ENCODE measurements at regions of chr22 and their contacts with region 1.

Region 1: GRCh38 chr22:22666307-22667091 is 22.1 kb downstream of the GGTLC2 start:
- DNase-seq: no peak
- ATAC-seq: peak; percentile 99
- H3K4me3 ChIP-seq: no peak overlapping the region
- H3K27ac ChIP-seq: no peak overlapping the region
- H3K4me1 ChIP-seq: no peaks in the 10 kb centered on the region
- H3K27me3 ChIP-seq: no peaks in the 10 kb centered on the region
- CTCF ChIP-seq: peak; percentile 60 to 81 (median 64); a peak in 5 of 6 replicates
- POLR2A ChIP-seq: no peak
- RAD21 ChIP-seq: peak; percentile 51

Region 2: DNA sequence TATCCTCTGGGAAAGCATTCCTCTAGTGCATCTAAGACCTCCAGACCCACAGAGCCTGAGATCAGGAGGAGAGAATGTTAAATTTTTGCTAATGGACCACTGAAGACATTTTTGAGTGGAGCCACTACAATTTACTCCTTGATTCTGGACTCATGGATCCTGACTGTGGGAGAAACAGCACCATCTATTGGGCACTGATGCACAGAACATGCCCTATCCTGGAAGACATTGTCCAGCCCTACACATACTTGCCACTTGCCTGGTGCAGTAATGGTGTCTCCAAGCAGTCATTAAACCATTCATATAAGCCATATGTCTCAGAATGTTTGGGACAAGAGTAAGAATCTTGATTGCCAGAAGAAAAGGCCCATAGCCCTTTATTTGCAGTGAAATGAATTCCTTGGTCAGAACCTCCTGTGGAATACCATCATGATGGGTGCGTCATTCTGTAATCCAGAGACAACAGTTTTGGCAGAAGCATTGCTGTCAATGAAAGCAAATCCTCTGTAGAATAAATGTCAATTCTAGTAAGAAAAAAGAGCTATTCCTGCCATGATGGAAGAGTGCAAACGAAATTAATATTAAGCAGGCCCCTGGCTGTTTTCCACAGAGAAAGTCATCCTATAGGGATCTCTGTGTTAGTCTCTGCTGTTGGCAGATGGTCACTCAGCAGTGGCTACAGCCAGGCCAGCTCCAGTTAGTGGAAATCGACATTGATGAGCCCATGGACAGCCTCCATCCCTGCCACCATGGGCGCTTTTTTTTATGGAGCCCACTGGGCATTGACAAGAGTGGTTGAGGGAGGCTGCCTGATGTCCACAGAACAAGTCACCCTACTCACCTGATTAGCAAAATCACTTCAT is 21.4 kb after region 1 on chr22:
- CTCF ChIA-PET with region 1: interaction called, 26 read pairs
- POLR2A ChIA-PET with region 1: interaction called, 3 read pairs
- RAD21 ChIA-PET with region 1: interaction called in 1 of 2 experiments, 7 read pairs
- intact Hi-C with region 1: no loop called
- DNase-seq: no peak
- ATAC-seq: peak; percentile 89
- H3K4me3 ChIP-seq: no peak overlapping the region
- H3K27ac ChIP-seq: no peak overlapping the region
- H3K4me1 ChIP-seq: peaks cover 0 to 6% of the 10 kb centered on the region in 2 experiments; a peak in 3 of 4 replicates
- H3K27me3 ChIP-seq: no peaks in the 10 kb centered on the region
- CTCF ChIP-seq: peak; percentile 56 to 83 (median 82); a peak in 5 of 6 replicates
- POLR2A ChIP-seq: no peak
- RAD21 ChIP-seq: peak; percentile 58

Region 3: DNA sequence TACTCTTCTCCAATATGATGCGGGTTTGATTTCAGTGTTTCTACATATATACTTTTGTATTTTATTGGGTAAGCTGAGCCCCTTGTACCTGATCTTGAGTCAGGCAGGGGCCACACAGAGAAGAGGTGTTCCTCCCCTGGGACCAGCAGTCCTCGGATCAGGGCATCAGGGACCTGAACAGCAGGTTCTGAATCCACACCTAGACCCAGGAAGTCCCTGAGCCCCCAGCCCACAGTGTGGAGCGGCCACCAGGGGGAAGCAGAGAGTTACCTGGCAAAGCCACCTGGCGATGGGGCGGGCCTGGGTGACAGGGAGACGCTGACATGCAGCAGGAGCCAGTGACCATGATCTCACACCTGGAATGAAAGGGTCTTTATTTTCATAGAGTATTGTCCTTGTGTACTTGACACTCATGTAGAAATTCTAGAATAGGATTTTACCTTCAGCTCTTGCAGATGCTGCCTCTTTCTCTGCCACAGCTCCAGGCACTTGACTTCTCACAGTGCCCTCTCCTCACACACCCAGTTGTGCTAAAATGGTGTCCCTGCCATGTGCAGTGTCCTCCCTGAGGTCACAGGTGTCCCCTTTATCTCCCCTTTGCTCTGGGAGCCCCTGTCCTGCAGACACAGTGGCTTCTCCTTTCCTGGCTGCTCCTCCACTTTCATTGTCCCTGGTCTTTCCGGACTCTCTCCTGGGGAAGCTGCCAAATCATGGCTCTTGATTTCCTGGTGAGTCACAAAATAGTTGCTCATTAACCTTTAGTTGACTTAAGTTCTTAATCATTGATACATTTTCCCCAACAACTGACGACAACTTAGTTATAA is 26.4 kb after region 1 on chr22:
- CTCF ChIA-PET with region 1: interaction called, 14 read pairs
- POLR2A ChIA-PET with region 1: no interaction called
- RAD21 ChIA-PET with region 1: interaction called, 3 read pairs
- intact Hi-C with region 1: no loop called
- DNase-seq: no peak
- ATAC-seq: peak; percentile 99
- H3K4me3 ChIP-seq: peak overlapping the region in 1 of 2 experiments; percentile 36; a peak in 2 of 4 replicates
- H3K27ac ChIP-seq: no peak overlapping the region
- H3K4me1 ChIP-seq: peaks cover 10 to 24% of the 10 kb centered on the region in 2 experiments; a peak in 3 of 4 replicates
- H3K27me3 ChIP-seq: no peaks in the 10 kb centered on the region
- CTCF ChIP-seq: peak; percentile 69 to 98 (median 96); a peak in 5 of 6 replicates
- POLR2A ChIP-seq: no peak
- RAD21 ChIP-seq: peak; percentile 42

Region 4: DNA sequence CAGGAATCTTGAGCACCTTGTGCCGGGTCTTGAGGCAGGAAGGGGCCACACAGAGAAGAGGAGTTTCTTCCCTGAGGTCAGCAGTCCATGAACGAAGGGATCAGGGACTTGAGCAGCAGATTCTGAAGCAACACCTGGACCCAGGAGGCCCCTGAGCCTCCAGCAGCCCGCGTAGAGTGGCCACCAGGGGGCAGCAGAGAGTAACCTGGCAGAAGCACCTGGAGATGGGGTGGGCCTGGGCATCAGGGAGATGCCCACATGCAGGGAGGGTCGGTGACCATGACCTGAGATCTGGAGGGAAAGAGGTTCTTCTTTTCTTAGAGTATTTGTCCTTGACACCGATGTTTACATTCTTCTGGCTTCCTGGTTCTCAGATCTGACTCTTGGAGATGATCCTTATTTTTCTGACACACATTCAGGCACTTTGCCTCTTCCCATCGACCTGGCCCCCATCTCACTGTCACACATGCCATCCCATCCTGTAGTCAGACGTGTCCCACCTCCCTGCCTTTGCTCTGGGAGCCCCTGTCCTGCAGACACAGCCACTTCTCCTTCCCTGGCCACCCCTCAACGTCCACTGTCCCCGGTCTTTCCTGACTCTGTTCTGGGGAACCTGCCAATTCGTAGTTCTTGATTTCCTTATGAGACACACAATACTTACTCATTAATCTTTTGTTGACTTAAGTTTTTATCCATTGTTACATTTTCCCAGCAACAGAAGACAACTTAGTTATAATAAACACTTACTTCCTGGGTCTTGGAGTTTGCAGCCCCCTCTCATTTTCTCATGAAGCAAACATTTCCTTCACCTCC is 44.4 kb after region 1 on chr22:
- CTCF ChIA-PET with region 1: interaction called, 15 read pairs
- POLR2A ChIA-PET with region 1: no interaction called
- RAD21 ChIA-PET with region 1: interaction called in 1 of 2 experiments, 3 read pairs
- intact Hi-C with region 1: no loop called
- DNase-seq: no peak
- ATAC-seq: peak; percentile 96
- H3K4me3 ChIP-seq: no peak overlapping the region
- H3K27ac ChIP-seq: no peak overlapping the region
- H3K4me1 ChIP-seq: no peaks in the 10 kb centered on the region
- H3K27me3 ChIP-seq: no peaks in the 10 kb centered on the region
- CTCF ChIP-seq: peak; percentile 61 to 98 (median 97); a peak in 5 of 6 replicates
- POLR2A ChIP-seq: no peak
- RAD21 ChIP-seq: peak; percentile 34; the same call in 1 of the 2 replicates

Region 5: GRCh38 chr22:22770280-22770871 is 103.9 kb after region 1 on chr22:
- CTCF ChIA-PET with region 1: interaction called, 12 read pairs
- POLR2A ChIA-PET with region 1: no interaction called
- RAD21 ChIA-PET with region 1: interaction called in 1 of 2 experiments, 3 read pairs
- intact Hi-C with region 1: no loop called
- DNase-seq: no peak
- ATAC-seq: peak; percentile 96
- H3K4me3 ChIP-seq: no peak overlapping the region
- H3K27ac ChIP-seq: no peak overlapping the region
- H3K4me1 ChIP-seq: no peaks in the 10 kb centered on the region
- H3K27me3 ChIP-seq: peaks cover 8% of the 10 kb centered on the region; the same call in 1 of the 2 replicates
- CTCF ChIP-seq: peak; percentile 59 to 94 (median 90); a peak in 5 of 6 replicates
- POLR2A ChIP-seq: no peak
- RAD21 ChIP-seq: peak; percentile 38; the same call in 1 of the 2 replicates